ENCODE measurements at regions of chr2 and their contacts with region 1.

Region 1: GRCh38 chr2:60581433-60582282 is 28.2 kb upstream of the BCL11A start:
- DNase-seq: peak; percentile 36
- ATAC-seq: peak; percentile 98
- H3K4me3 ChIP-seq: peak overlapping the region in 1 of 3 experiments; percentile 47; a peak in 1 of 6 replicates
- H3K27ac ChIP-seq: no peak overlapping the region
- H3K4me1 ChIP-seq: 0 out of 2 replicates have a peak, but pooled peaks cover 9% of the 10 kb centered on the region
- H3K27me3 ChIP-seq: peaks cover 6 to 61% of the 10 kb centered on the region in 2 experiments; a peak in 4 of 5 replicates
- CTCF ChIP-seq: peak; percentile 96
- EP300 ChIP-seq: no peak
- POLR2A ChIP-seq: no peak
- RAD21 ChIP-seq: peak; percentile 99

Region 2: GRCh38 chr2:58762176-58762781 is 1819.4 kb before region 1 on chr2:
- CTCF ChIA-PET with region 1: interaction called, 3 read pairs
- POLR2A ChIA-PET with region 1: no interaction called
- in situ Hi-C with region 1: loop called (anchors 25 kb)
- intact Hi-C with region 1: loop called (anchors 5 kb)
- DNase-seq: peak; percentile 35
- ATAC-seq: peak; percentile 93
- H3K4me3 ChIP-seq: no peak overlapping the region
- H3K27ac ChIP-seq: no peak overlapping the region
- H3K4me1 ChIP-seq: no peaks in the 10 kb centered on the region
- H3K27me3 ChIP-seq: no peaks in the 10 kb centered on the region
- CTCF ChIP-seq: peak; percentile 74
- EP300 ChIP-seq: no peak
- POLR2A ChIP-seq: no peak
- RAD21 ChIP-seq: peak; percentile 52; the same call in 1 of the 2 replicates

Region 3: GRCh38 chr2:59000796-59001195 is 1580.9 kb before region 1 on chr2:
- CTCF ChIA-PET with region 1: no interaction called
- POLR2A ChIA-PET with region 1: no interaction called
- in situ Hi-C with region 1: loop called (anchors 25 kb)
- intact Hi-C with region 1: no loop called
- DNase-seq: no peak
- ATAC-seq: no peak
- H3K4me3 ChIP-seq: no peak overlapping the region
- H3K27ac ChIP-seq: no peak overlapping the region
- H3K4me1 ChIP-seq: no peaks in the 10 kb centered on the region
- H3K27me3 ChIP-seq: no peaks in the 10 kb centered on the region
- CTCF ChIP-seq: no peak
- EP300 ChIP-seq: no peak
- POLR2A ChIP-seq: no peak
- RAD21 ChIP-seq: no peak

Region 4: GRCh38 chr2:59025157-59025757 is 1556.4 kb before region 1 on chr2:
- CTCF ChIA-PET with region 1: interaction called, 5 read pairs
- POLR2A ChIA-PET with region 1: no interaction called
- in situ Hi-C with region 1: loop called (anchors 25 kb)
- intact Hi-C with region 1: loop called (anchors 2 kb)
- DNase-seq: peak; percentile 13
- ATAC-seq: peak; percentile 96
- H3K4me3 ChIP-seq: no peak overlapping the region
- H3K27ac ChIP-seq: no peak overlapping the region
- H3K4me1 ChIP-seq: no peaks in the 10 kb centered on the region
- H3K27me3 ChIP-seq: no peaks in the 10 kb centered on the region
- CTCF ChIP-seq: peak; percentile 84
- EP300 ChIP-seq: no peak
- POLR2A ChIP-seq: no peak
- RAD21 ChIP-seq: peak; percentile 60; the same call in 1 of the 2 replicates

Region 5: DNA sequence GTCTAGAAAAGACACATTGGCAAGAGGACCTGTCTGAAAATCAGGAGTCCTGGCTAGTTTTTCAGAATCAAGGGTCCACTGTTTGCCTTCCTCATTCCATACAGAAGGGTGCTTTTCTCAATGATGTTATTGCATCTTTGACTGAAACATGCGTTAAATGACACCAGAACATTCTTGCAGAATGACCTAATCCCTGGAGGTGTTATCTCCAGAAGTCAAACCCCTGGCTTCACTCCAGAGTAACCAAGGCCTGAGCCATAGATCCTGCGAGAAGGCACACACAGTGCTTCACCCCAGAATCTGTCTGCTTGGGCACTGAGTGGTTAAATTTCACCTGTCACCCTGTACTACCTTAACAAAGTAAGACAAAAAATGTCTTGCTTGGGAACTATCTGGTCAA is 1285.4 kb before region 1 on chr2:
- CTCF ChIA-PET with region 1: interaction called, 11 read pairs
- POLR2A ChIA-PET with region 1: no interaction called
- in situ Hi-C with region 1: loop called (anchors 10 kb)
- intact Hi-C with region 1: loop called (anchors 1 kb)
- DNase-seq: peak; percentile 10
- ATAC-seq: no peak; the same call in 2 of the 3 replicates
- H3K4me3 ChIP-seq: no peak overlapping the region
- H3K27ac ChIP-seq: no peak overlapping the region
- H3K4me1 ChIP-seq: no peaks in the 10 kb centered on the region
- H3K27me3 ChIP-seq: no peaks in the 10 kb centered on the region
- CTCF ChIP-seq: no peak
- EP300 ChIP-seq: no peak
- POLR2A ChIP-seq: no peak
- RAD21 ChIP-seq: no peak

Region 6: GRCh38 chr2:59301466-59302402 is 1279.9 kb before region 1 on chr2:
- CTCF ChIA-PET with region 1: interaction called, 11 read pairs
- POLR2A ChIA-PET with region 1: no interaction called
- in situ Hi-C with region 1: loop called (anchors 10 kb)
- intact Hi-C with region 1: loop called (anchors 1 kb)
- DNase-seq: peak; percentile 67
- ATAC-seq: peak; percentile 97
- H3K4me3 ChIP-seq: no peak overlapping the region
- H3K27ac ChIP-seq: no peak overlapping the region
- H3K4me1 ChIP-seq: no peaks in the 10 kb centered on the region
- H3K27me3 ChIP-seq: no peaks in the 10 kb centered on the region
- CTCF ChIP-seq: peak; percentile 75
- EP300 ChIP-seq: no peak
- POLR2A ChIP-seq: no peak
- RAD21 ChIP-seq: peak; percentile 32; the same call in 1 of the 2 replicates

Region 7: DNA sequence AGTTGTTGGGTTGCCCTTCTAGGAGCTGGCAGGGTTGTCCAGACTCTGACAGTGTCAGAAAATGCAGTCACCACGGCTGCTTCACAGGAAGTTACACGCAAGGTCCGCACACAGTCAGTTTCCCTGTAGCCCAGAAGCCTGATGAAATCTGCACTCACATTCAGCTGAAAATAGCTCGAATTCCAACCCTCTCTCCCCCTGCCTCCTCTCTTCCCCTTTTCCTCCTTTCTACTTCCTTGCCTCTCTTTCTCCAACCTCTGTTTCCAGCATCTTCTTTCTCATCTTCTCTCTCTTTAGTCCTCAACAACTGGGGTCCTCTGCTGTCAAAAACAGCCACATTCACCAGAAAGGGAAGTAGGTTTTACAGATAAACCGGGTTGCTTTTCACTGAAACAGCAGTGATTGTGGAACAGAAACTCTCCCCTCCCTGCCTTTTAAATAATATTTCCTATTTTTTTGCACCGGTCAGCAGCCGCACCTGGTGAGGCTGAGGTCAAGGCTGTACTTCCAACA is 97.5 kb before region 1 on chr2:
- CTCF ChIA-PET with region 1: no interaction called
- POLR2A ChIA-PET with region 1: no interaction called
- in situ Hi-C with region 1: no loop called
- intact Hi-C with region 1: no loop called
- DNase-seq: peak; percentile 13
- ATAC-seq: no peak
- H3K4me3 ChIP-seq: no peak overlapping the region
- H3K27ac ChIP-seq: no peak overlapping the region
- H3K4me1 ChIP-seq: peaks cover 53% of the 10 kb centered on the region
- H3K27me3 ChIP-seq: peaks cover 0 to 14% of the 10 kb centered on the region in 2 experiments; a peak in 1 of 5 replicates
- CTCF ChIP-seq: no peak
- EP300 ChIP-seq: no peak
- POLR2A ChIP-seq: no peak
- RAD21 ChIP-seq: no peak

Region 8: GRCh38 chr2:60560734-60561644 is 20.7 kb before region 1 on chr2:
- CTCF ChIA-PET with region 1: interaction called, 7 read pairs
- POLR2A ChIA-PET with region 1: no interaction called
- in situ Hi-C with region 1: no loop called
- intact Hi-C with region 1: loop called (anchors 2 kb)
- DNase-seq: peak; percentile 36
- ATAC-seq: peak; percentile 93
- H3K4me3 ChIP-seq: no peak overlapping the region
- H3K27ac ChIP-seq: no peak overlapping the region
- H3K4me1 ChIP-seq: no peaks in the 10 kb centered on the region
- H3K27me3 ChIP-seq: peaks cover 0 to 16% of the 10 kb centered on the region in 2 experiments; a peak in 3 of 5 replicates
- CTCF ChIP-seq: peak; percentile 52
- EP300 ChIP-seq: no peak
- POLR2A ChIP-seq: no peak
- RAD21 ChIP-seq: no peak